GM18951 (cell line): ENCODE measurements at regions of chr22 and their contacts with region 1.

Region 1: GRCh38 chr22:46296257-46297150 is at the start of gene GTSE1:
- POLR2A ChIP-seq: peak; percentile 87

Region 2: DNA sequence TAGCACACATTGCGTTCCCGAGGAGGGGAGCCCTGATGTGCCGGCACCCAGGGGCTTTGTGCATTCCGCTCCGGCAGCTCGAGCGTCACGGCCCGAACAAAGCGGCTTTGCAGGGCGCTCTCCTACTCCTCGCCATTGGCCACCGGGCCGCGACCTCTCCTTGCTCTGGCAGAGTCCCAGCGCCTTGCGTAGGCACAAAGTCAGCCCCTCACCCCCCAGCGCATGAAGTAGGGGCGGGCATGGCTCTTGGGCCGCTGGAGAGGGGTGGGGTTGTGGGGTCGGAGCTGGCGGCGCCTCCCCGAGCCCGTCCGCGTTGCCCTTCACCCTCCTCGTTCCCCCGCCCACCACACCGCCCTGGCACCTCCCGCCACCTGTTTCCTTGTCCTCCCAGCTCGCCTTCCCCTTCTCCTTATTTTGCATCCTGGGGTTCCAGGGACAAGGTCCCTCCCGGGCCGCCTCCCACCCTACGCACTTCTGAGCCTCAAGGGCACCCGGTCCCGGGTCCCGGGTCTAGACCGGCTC is 146.9 kb before region 1 on chr22:
- in situ Hi-C with region 1: loop called (anchors 10 kb)
- POLR2A ChIP-seq: no peak

Region 3: DNA sequence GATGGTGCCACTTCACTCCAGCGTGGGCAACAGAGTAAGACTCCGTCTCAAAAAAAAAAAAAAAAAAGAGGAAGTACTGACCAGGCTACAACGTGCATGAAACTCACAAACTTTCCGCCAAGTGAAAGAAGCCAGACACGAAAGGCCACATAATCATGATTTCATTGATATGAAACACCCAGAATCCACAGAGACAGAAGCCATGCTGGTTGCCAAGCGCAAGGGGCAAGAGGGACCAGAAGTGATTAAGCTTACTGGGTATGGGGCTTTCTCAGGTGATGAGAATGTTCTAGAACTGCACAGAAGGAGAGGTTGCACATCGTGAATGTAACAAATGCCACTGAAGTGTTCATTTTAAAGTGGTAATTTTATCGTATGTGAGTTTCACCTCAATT is 180.0 kb after region 1 on chr22:
- in situ Hi-C with region 1: no loop called
- POLR2A ChIP-seq: no peak